ENCODE measurements at regions of chr10 and their contacts with region 1.

Region 1: GRCh38 chr10:29446327-29446726 is 157.5 kb downstream of the LYZL1 start:
- DNase-seq: no peak
- H3K4me3 ChIP-seq: no peak overlapping the region
- H3K27ac ChIP-seq: no peak overlapping the region
- H3K4me1 ChIP-seq: peaks cover 0 to 2% of the 10 kb centered on the region in 2 experiments; a peak in 2 of 4 replicates
- H3K27me3 ChIP-seq: no peaks in the 10 kb centered on the region
- CTCF ChIP-seq: no peak
- EP300 ChIP-seq: no peak
- RAD21 ChIP-seq: no peak

Region 2: GRCh38 chr10:29377333-29377961 is 68.9 kb before region 1 on chr10:
- CTCF ChIA-PET with region 1: interaction called, 20 read pairs
- POLR2A ChIA-PET with region 1: no interaction called
- DNase-seq: peak; percentile 55
- H3K4me3 ChIP-seq: no peak overlapping the region
- H3K27ac ChIP-seq: no peak overlapping the region
- H3K4me1 ChIP-seq: peaks cover 0 to 5% of the 10 kb centered on the region in 2 experiments; a peak in 2 of 4 replicates
- H3K27me3 ChIP-seq: no peaks in the 10 kb centered on the region
- CTCF ChIP-seq: peak; percentile 90
- EP300 ChIP-seq: no peak
- RAD21 ChIP-seq: peak; percentile 74

Region 3: GRCh38 chr10:29386342-29386999 is 59.9 kb before region 1 on chr10:
- CTCF ChIA-PET with region 1: interaction called, 28 read pairs
- POLR2A ChIA-PET with region 1: no interaction called
- DNase-seq: peak; percentile 56
- H3K4me3 ChIP-seq: peak overlapping the region in 1 of 2 experiments; percentile 18; a peak in 1 of 4 replicates
- H3K27ac ChIP-seq: no peak overlapping the region
- H3K4me1 ChIP-seq: no peaks in the 10 kb centered on the region; a peak in 1 of 4 replicates
- H3K27me3 ChIP-seq: peaks cover 9% of the 10 kb centered on the region
- CTCF ChIP-seq: peak; percentile 82
- EP300 ChIP-seq: no peak
- RAD21 ChIP-seq: peak; percentile 57

Region 4: DNA sequence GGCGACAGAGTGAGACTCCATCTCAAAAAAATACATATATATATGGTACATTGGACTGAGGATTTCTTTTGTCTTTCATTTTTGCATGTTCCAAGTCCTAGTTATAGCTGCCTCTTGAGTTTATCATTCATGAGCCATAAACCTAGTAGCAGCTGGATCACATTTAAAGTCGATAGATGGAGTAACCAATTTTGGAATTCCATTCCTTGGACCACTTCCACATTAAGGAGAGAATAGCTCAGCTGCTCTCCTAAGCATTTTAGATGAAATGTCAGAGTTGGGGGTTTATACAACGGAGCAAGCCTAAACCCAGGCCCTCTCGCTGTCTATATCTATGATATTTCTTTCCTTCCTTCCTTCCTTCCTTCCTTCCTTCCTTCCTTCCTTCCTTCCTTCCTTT is 16.2 kb before region 1 on chr10:
- CTCF ChIA-PET with region 1: interaction called, 16 read pairs
- POLR2A ChIA-PET with region 1: no interaction called
- DNase-seq: no peak
- H3K4me3 ChIP-seq: no peak overlapping the region
- H3K27ac ChIP-seq: no peak overlapping the region
- H3K4me1 ChIP-seq: peaks cover 2 to 10% of the 10 kb centered on the region in 2 experiments; a peak in 2 of 4 replicates
- H3K27me3 ChIP-seq: no peaks in the 10 kb centered on the region
- CTCF ChIP-seq: no peak
- EP300 ChIP-seq: no peak
- RAD21 ChIP-seq: no peak

Region 5: GRCh38 chr10:29435809-29436501 is 10.4 kb before region 1 on chr10:
- CTCF ChIA-PET with region 1: interaction called, 12 read pairs
- POLR2A ChIA-PET with region 1: no interaction called
- DNase-seq: no peak
- H3K4me3 ChIP-seq: no peak overlapping the region
- H3K27ac ChIP-seq: peak overlapping the region in 1 of 2 experiments; percentile 38; a peak in 2 of 4 replicates
- H3K4me1 ChIP-seq: peaks cover 2 to 10% of the 10 kb centered on the region in 2 experiments; a peak in 2 of 4 replicates
- H3K27me3 ChIP-seq: no peaks in the 10 kb centered on the region
- CTCF ChIP-seq: no peak
- EP300 ChIP-seq: no peak
- RAD21 ChIP-seq: no peak